CD8-positive, alpha-beta memory T cell (primary cell): ENCODE measurements at regions of chr9 and their contacts with region 1.

Region 1: DNA sequence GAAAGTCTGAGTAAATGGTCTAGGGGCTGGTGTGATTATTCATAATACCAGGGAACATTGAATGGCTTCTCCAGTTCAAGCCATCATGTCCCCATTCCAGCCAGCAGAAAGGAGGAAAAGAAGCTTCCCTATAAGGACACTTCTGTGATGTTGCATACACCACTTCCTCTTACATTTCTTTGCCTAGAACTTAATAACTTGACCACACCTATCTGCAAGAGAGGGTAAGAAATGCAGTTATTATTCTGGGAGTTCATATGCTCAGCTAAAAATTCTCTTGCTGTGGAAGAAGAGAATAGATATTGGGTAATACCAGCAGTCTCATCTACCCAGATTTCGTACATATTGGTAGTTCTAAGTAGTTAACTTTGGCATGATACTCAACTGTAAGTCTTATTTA is 166.1 kb downstream of the SLC28A3 start:
- DNase-seq: no peak
- H3K4me3 ChIP-seq: no peak overlapping the region
- H3K4me3 Mint-ChIP-seq: no peak overlapping the region
- H3K27ac ChIP-seq: no peak overlapping the region
- H3K27ac Mint-ChIP-seq: no peak overlapping the region
- H3K4me1 ChIP-seq: no peaks in the 10 kb centered on the region
- H3K4me1 Mint-ChIP-seq: peaks cover 0 to 5% (median 1%) of the 10 kb centered on the region in 3 donors
- H3K27me3 ChIP-seq: no peaks in the 10 kb centered on the region
- H3K27me3 Mint-ChIP-seq: peaks cover 0 to under 1% of the 10 kb centered on the region in 2 donors

Region 2: DNA sequence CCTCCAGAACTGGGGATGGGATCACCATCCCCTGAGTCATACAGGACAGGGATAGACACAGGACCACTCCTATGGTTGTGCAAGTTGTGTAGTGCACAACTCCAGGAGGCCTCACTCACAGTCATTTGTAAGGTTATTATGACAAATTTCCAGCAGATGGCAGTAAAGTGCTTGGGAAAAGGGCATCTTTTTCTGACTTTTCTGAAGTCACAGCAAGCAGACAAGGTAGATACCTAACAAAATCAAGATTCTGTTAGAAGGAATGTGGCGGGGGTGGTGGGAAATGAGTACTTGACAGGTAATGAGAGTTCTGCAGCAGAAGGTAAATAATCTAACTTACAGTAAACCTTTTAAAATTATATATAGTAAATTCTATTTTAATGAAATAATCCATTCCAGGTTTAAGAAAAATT is 236.6 kb before region 1 on chr9:
- CTCF ChIA-PET with region 1: interaction called, 25 read pairs
- POLR2A ChIA-PET with region 1: no interaction called
- DNase-seq: peak in 2 of 5 donors; percentile 54 to 56
- H3K4me3 ChIP-seq: no peak overlapping the region
- H3K4me3 Mint-ChIP-seq: no peak overlapping the region
- H3K27ac ChIP-seq: no peak overlapping the region
- H3K27ac Mint-ChIP-seq: no peak overlapping the region
- H3K4me1 ChIP-seq: no peaks in the 10 kb centered on the region
- H3K4me1 Mint-ChIP-seq: peaks cover 0 to 2% (median 0%) of the 10 kb centered on the region in 3 donors
- H3K27me3 ChIP-seq: no peaks in the 10 kb centered on the region
- H3K27me3 Mint-ChIP-seq: no peaks in the 10 kb centered on the region

Region 3: DNA sequence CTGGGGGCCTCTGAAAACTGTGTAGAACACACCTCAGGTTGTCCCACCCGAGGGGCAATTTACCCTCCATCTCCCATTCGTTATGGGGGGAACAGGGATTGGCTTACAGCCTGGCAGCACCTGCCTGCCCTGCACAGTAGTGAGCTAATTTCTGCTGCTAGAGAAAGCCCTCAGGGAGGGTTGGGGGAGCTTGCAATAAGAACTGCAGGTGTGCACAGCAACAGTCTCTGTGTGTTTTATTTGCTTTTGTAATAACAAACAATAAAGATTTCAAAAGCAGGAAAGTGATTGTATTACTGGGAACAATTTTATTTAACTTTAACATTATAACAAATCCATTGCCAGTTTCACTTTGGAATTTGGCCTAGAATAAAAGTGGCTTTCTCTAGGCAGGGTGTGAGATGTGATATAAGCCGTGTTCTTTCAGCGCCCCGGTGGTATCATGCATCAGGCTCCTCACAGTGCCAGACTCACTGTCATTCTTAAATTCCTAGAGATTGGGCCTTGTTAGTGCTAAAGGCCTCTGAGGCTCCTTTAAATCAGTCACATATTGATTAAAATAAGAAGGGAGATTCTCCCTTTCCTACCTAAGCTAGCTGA is 112.8 kb before region 1 on chr9:
- CTCF ChIA-PET with region 1: no interaction called
- POLR2A ChIA-PET with region 1: no interaction called
- DNase-seq: no peak
- H3K4me3 ChIP-seq: no peak overlapping the region
- H3K4me3 Mint-ChIP-seq: no peak overlapping the region
- H3K27ac ChIP-seq: no peak overlapping the region
- H3K27ac Mint-ChIP-seq: no peak overlapping the region
- H3K4me1 ChIP-seq: no peaks in the 10 kb centered on the region
- H3K4me1 Mint-ChIP-seq: no peaks in the 10 kb centered on the region
- H3K27me3 ChIP-seq: no peaks in the 10 kb centered on the region
- H3K27me3 Mint-ChIP-seq: peaks cover 0 to 21% of the 10 kb centered on the region in 2 donors

Region 4: DNA sequence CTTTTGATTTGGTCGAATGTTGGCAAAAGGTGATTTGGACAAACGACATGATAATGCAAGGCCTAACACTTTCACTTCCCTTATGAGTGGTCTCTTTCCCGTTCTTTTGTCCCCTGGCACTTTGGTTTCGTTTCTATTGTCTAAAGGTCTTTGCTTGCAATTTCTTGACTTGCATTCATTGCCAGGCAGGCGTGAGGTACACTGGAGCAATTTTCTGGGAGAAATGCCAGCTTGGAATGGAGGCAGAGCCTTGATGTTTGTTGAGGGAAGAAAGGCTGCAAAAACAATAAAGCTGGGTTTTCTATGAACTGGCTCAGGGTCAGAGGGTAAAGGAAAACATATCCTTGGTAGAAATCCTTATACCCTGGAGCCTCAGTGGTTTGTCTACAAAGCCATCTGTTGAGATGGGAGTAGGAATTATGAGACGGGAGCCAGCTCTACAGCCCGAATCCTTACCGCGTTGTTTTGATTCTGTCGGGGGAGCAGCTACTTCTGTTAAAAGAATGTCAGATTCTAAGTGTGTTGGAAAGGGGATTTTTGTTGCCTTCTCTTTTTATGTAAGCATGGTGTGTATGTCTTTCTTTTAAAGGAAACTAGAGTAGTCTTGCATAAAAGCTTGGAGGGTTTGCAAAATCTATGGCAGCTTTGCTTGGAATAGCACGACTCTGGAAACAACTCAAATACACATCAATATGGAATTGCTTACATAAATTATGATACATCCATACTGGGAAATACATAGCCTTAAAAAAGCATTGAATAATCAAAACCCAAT is 35.0 kb before region 1 on chr9:
- CTCF ChIA-PET with region 1: no interaction called
- POLR2A ChIA-PET with region 1: no interaction called
- DNase-seq: no peak
- H3K4me3 ChIP-seq: no peak overlapping the region
- H3K4me3 Mint-ChIP-seq: peak overlapping the region in 6 of 7 donors; percentile 61 to 86 (median 75)
- H3K27ac ChIP-seq: no peak overlapping the region
- H3K27ac Mint-ChIP-seq: peak overlapping the region in 1 of 8 donors; percentile 1
- H3K4me1 ChIP-seq: no peaks in the 10 kb centered on the region
- H3K4me1 Mint-ChIP-seq: peaks cover 12 to 13% (median 12%) of the 10 kb centered on the region in 3 donors
- H3K27me3 ChIP-seq: peaks cover 15% of the 10 kb centered on the region
- H3K27me3 Mint-ChIP-seq: peaks cover 20 to 65% of the 10 kb centered on the region in 2 donors

Region 5: GRCh38 chr9:84163052-84163650 is 11.3 kb before region 1 on chr9:
- CTCF ChIA-PET with region 1: interaction called, 10 read pairs
- POLR2A ChIA-PET with region 1: no interaction called
- DNase-seq: no peak
- H3K4me3 ChIP-seq: no peak overlapping the region
- H3K4me3 Mint-ChIP-seq: no peak overlapping the region
- H3K27ac ChIP-seq: no peak overlapping the region
- H3K27ac Mint-ChIP-seq: no peak overlapping the region
- H3K4me1 ChIP-seq: no peaks in the 10 kb centered on the region
- H3K4me1 Mint-ChIP-seq: no peaks in the 10 kb centered on the region
- H3K27me3 ChIP-seq: peaks cover 6% of the 10 kb centered on the region
- H3K27me3 Mint-ChIP-seq: peaks cover 13 to 42% of the 10 kb centered on the region in 2 donors

Region 6: DNA sequence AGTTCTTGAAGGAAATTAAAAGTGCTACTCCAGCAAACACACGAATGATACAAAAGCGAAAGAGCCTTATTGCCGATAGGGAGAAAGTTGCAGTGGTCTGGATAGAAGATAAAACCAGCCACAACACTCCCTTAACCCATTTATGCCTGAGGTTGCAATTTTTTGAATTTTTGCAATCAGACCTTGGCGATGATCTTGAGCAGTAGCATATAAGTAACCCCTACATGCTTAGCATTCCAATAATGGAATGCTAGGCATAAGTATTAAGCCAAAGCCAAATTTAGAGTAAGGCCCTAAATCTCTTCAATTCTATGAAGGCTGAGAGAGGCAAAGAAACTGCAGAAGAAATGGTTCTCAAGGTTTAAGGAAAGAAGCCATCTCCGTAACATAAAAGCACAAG is 12.6 kb after region 1 on chr9:
- CTCF ChIA-PET with region 1: interaction called, 13 read pairs
- POLR2A ChIA-PET with region 1: no interaction called
- DNase-seq: no peak
- H3K4me3 ChIP-seq: no peak overlapping the region
- H3K4me3 Mint-ChIP-seq: no peak overlapping the region
- H3K27ac ChIP-seq: no peak overlapping the region
- H3K27ac Mint-ChIP-seq: no peak overlapping the region
- H3K4me1 ChIP-seq: no peaks in the 10 kb centered on the region
- H3K4me1 Mint-ChIP-seq: no peaks in the 10 kb centered on the region
- H3K27me3 ChIP-seq: no peaks in the 10 kb centered on the region
- H3K27me3 Mint-ChIP-seq: peaks cover 20 to 26% of the 10 kb centered on the region in 2 donors